Sigmoid colon (tissue), 7 donors: ENCODE measurements at regions of chr14 and their contacts with region 1.

Region 1: DNA sequence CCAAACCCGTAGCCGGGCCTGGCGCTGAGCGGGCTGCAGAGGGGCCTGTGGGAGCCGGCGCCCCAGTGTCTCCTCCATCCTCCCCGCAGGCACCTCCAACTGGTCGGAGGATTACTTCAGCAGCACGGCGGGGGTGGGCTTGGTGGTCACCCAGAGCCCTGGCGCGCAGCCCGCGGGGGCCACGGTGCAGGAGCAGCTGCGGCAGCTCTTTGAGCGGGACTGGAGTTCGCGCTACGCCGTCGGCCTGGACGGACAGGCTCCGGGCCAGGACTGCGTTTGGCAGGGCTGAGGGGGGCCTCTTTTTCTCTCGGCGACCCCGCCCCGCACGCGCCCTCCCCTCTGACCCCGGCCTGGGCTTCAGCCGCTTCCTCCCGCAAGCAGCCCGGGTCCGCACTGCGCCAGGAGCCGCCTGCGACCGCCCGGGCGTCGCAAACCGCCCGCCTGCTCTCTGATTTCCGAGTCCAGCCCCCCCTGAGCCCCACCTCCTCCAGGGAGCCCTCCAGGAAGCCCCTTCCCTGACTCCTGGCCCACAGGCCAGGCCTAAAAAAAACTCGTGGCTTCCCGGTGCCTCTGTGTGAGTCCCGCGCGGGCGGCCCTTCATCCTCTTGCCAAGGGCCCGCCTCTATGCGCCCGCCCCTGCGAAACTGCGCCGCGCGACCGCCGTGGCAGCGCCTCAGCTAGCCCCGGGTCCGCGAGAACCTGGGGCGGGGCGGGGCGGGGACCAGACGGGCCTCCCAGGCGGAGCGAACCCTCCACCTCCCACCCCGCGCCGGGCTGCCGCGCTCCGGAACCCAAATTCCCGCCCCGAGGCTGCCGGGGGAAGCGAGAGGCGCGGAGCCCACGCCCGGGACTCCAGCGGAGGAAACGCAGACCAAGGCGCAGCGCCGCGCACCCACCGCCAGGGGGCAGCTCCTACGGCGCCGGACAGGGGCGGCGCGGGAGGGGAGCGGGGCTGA is 8.3 kb downstream of the PLD4 start:
- DNase-seq: peak; percentile 95
- H3K4me3 ChIP-seq: peak overlapping the region; percentile 50 to 72 (median 61)
- H3K27ac ChIP-seq: peak overlapping the region; percentile 65 to 83 (median 76)
- H3K4me1 ChIP-seq: peaks cover 0 to 23% (median 20%) of the 10 kb centered on the region in 4 donors
- H3K27me3 ChIP-seq: no peaks in the 10 kb centered on the region
- CTCF ChIP-seq: peak; percentile 43 to 83 (median 60)
- EP300 ChIP-seq: no peak
- POLR2A ChIP-seq: no peak

Region 2: GRCh38 chr14:104895786-104896661 is 36.9 kb before region 1 on chr14:
- intact Hi-C with region 1: loop called (anchors 5 kb)
- DNase-seq: peak; percentile 65
- H3K4me3 ChIP-seq: no peak overlapping the region
- H3K27ac ChIP-seq: peak overlapping the region in 1 of 4 donors; percentile 20
- H3K4me1 ChIP-seq: peaks cover 0 to 20% (median 18%) of the 10 kb centered on the region in 4 donors
- H3K27me3 ChIP-seq: no peaks in the 10 kb centered on the region
- CTCF ChIP-seq: no peak
- EP300 ChIP-seq: no peak
- POLR2A ChIP-seq: no peak

Region 3: DNA sequence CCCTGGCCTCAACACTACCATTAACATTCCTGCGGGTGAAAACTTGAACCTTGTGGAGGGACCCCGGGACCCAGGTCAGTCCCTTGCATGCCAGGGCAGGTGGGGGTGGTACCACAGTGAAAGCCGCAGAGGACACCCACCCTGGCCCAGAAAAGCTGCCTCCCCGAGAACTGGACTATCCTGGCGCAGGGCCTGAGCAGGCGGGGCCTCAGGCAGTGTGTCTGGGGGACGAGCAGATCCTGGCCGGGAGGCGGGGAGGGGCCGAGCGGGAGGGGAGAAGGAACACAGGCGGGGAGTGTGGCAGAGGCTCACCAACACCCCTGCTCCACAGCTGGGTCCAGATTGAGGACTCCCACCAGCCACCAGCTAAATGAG is 35.2 kb after region 1 on chr14:
- intact Hi-C with region 1: loop called (anchors 1 kb)
- DNase-seq: peak; percentile 96
- H3K4me3 ChIP-seq: peak overlapping the region; percentile 49 to 64 (median 56)
- H3K27ac ChIP-seq: peak overlapping the region; percentile 90 to 97 (median 96)
- H3K4me1 ChIP-seq: peaks cover 0 to 76% (median 73%) of the 10 kb centered on the region in 4 donors
- H3K27me3 ChIP-seq: no peaks in the 10 kb centered on the region
- CTCF ChIP-seq: no peak
- EP300 ChIP-seq: no peak
- POLR2A ChIP-seq: peak; percentile 45 to 52

Region 4: GRCh38 chr14:105086833-105087307 is 153.9 kb after region 1 on chr14:
- intact Hi-C with region 1: no loop called
- DNase-seq: peak; percentile 89
- H3K4me3 ChIP-seq: peak overlapping the region; percentile 20 to 69 (median 52)
- H3K27ac ChIP-seq: peak overlapping the region; percentile 54 to 87 (median 77)
- H3K4me1 ChIP-seq: peaks cover 0 to 51% (median 39%) of the 10 kb centered on the region in 4 donors
- H3K27me3 ChIP-seq: no peaks in the 10 kb centered on the region
- CTCF ChIP-seq: peak; percentile 68 to 79 (median 74)
- EP300 ChIP-seq: no peak
- POLR2A ChIP-seq: no peak